ENCODE measurements at regions of chr6 and their contacts with region 1.

Region 1: GRCh38 chr6:26216356-26216885 is 129.2 kb downstream of the HFE start:
- DNase-seq: peak; percentile 80 to 82
- ATAC-seq: peak; percentile 92
- H3K4me3 ChIP-seq: peak overlapping the region; percentile 44 to 56
- H3K27ac ChIP-seq: peak overlapping the region; percentile 87 to 94
- H3K4me1 ChIP-seq: no peaks in the 10 kb centered on the region
- H3K27me3 ChIP-seq: no peaks in the 10 kb centered on the region

Region 2: DNA sequence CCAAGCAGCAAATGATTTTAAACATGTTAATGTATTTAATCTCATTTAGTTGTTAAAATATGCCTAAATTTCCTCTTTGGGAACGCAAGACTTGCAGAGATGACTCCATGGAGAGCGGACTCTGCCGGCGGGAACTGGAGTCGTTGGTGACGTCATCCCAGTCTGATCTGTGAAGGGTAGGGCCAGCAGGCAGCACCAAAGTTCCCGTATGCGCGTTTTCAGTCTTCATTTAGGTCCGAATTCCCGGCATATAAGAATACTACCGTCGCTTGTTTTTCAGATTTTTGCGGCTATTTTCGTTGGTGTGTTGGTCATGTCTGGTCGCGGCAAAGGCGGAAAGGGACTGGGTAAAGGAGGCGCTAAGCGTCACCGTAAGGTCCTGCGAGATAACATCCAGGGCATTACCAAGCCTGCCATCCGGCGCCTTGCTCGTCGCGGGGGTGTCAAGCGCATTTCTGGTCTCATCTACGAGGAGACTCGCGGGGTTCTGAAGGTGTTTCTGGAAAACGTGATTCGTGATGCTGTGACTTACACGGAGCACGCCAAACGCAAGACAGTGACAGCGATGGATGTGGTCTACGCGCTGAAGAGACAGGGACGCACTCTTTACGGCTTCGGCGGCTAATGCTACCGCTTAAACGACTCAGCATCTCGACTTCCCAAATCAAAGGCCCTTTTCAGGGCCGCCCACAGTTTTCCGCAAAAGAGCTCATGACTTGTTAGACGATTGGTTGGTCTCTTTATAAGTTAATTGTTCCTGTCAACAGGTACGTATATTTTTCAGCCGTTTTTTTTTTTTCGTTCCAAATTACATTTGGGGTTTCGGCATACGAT is 11.9 kb before region 1 on chr6:
- intact Hi-C with region 1: loop called in 1 of 2 experiments (anchors 1 kb)
- DNase-seq: peak; percentile 92 to 96
- ATAC-seq: peak; percentile 95
- H3K4me3 ChIP-seq: peak overlapping the region; percentile 62 to 68
- H3K27ac ChIP-seq: peak overlapping the region; percentile 10 to 100
- H3K4me1 ChIP-seq: no peaks in the 10 kb centered on the region
- H3K27me3 ChIP-seq: peaks cover 0 to 2% of the 10 kb centered on the region in 2 donors

Region 3: DNA sequence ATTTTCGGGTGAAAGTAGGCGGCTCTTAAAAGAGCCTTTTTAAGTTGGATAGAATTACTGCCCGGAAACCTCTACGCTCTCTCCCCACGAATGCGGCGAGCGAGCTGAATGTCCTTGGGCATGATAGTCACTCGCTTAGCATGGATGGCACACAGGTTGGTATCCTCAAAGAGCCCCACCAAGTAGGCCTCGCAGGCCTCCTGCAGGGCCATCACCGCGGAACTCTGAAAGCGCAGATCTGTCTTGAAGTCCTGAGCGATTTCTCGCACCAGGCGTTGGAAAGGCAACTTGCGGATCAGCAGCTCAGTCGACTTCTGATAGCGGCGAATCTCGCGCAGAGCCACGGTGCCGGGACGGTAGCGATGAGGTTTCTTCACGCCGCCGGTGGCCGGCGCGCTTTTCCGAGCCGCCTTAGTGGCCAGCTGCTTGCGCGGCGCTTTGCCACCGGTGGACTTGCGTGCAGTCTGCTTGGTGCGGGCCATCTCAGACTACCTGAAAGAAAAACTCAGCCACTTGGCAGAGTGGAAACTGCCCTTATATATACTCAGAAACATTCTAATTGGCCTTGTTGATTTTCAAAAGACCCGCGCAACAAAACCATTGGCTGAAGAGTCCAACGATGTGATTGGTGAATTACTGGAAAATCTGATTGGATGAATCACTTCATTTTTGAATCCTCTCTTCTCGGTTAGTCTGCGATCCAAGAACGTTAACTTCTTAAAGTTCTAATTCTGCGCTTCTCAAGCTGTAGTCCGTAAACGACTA is 54.7 kb after region 1 on chr6:
- intact Hi-C with region 1: loop called in 1 of 2 experiments (anchors 5 kb)
- DNase-seq: peak; percentile 64 to 79
- ATAC-seq: peak; percentile 82
- H3K4me3 ChIP-seq: peak overlapping the region in 1 of 2 donors; percentile 18
- H3K27ac ChIP-seq: peak overlapping the region in 1 of 2 donors; percentile 98
- H3K4me1 ChIP-seq: no peaks in the 10 kb centered on the region
- H3K27me3 ChIP-seq: no peaks in the 10 kb centered on the region